ENCODE measurements at regions of chr5 and their contacts with region 1.

Region 1: GRCh38 chr5:88268385-88269184 is at the start of gene TMEM161B:
- DNase-seq: peak; percentile 84
- H3K4me3 ChIP-seq: peak within 1 kb of the TSS; percentile 59 to 91 (median 86)
- H3K27ac ChIP-seq: peak within 1 kb of the TSS; percentile 4
- H3K4me1 ChIP-seq: peaks cover 11% of the 10 kb centered on the region
- H3K27me3 ChIP-seq: no peaks in the 10 kb centered on the region
- CTCF ChIP-seq: no peak
- POLR2A ChIP-seq: peak; percentile 72
- total RNA-seq, gene TMEM161B: 11.5 and 11.6 TPM in 2 replicates

Region 2: GRCh38 chr5:88119535-88120125 is 149.0 kb before region 1 on chr5:
- CTCF ChIA-PET with region 1: no interaction called
- POLR2A ChIA-PET with region 1: no interaction called
- dilution Hi-C with region 1: no loop called
- intact Hi-C with region 1: no loop called
- DNase-seq: no peak
- H3K4me3 ChIP-seq: no peak overlapping the region
- H3K27ac ChIP-seq: no peak overlapping the region
- H3K4me1 ChIP-seq: no peaks in the 10 kb centered on the region
- H3K27me3 ChIP-seq: no peaks in the 10 kb centered on the region
- CTCF ChIP-seq: no peak
- POLR2A ChIP-seq: no peak

Region 3: GRCh38 chr5:88140856-88141752 is 127.5 kb before region 1 on chr5:
- CTCF ChIA-PET with region 1: no interaction called
- POLR2A ChIA-PET with region 1: no interaction called
- dilution Hi-C with region 1: no loop called
- intact Hi-C with region 1: loop called (anchors 5 kb)
- DNase-seq: peak; percentile 96
- H3K4me3 ChIP-seq: peak overlapping the region; percentile 31 to 75 (median 38)
- H3K27ac ChIP-seq: no peak overlapping the region
- H3K4me1 ChIP-seq: peaks cover 12% of the 10 kb centered on the region
- H3K27me3 ChIP-seq: peaks cover 58 to 78% of the 10 kb centered on the region in 2 experiments
- CTCF ChIP-seq: peak; percentile 55 to 82
- POLR2A ChIP-seq: no peak

Region 4: DNA sequence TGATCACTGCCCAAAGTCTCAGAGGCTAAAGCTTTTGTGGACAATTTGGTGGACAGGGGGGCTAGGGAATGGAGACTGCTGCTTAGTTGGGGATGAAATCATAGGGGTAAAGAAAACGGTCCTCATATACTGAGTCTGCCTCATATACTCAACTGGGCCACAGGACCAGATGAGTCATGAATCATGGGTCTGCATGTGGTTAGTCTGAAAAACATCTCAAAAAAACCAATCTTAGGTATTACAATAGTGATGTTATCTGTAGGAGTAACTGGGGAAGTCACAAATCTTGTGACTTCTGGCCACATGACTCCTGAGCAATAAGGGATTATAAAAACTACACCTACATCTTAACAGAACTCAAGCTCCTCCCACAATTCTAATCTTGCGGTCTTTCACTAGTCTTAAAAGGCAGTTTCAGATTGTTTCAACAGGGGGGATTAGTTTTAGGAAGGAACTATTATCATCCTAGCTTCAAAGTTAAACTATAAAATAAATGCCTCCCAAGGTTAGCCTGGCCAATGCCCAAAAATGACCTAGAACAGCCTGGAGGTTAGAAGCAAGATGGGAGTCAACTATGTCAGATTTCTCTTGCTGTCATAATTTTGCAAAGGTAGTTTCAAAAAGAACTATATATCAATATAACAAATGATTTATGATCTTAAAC is 17.4 kb before region 1 on chr5:
- CTCF ChIA-PET with region 1: no interaction called
- POLR2A ChIA-PET with region 1: no interaction called
- dilution Hi-C with region 1: no loop called
- intact Hi-C with region 1: no loop called
- DNase-seq: no peak
- H3K4me3 ChIP-seq: no peak overlapping the region
- H3K27ac ChIP-seq: no peak overlapping the region
- H3K4me1 ChIP-seq: no peaks in the 10 kb centered on the region
- H3K27me3 ChIP-seq: no peaks in the 10 kb centered on the region
- CTCF ChIP-seq: no peak
- POLR2A ChIP-seq: no peak

Region 5: GRCh38 chr5:89055695-89056085 is 787.1 kb after region 1 on chr5:
- CTCF ChIA-PET with region 1: no interaction called
- POLR2A ChIA-PET with region 1: no interaction called
- dilution Hi-C with region 1: no loop called
- intact Hi-C with region 1: no loop called
- DNase-seq: no peak
- H3K4me3 ChIP-seq: no peak overlapping the region
- H3K27ac ChIP-seq: no peak overlapping the region
- H3K4me1 ChIP-seq: no peaks in the 10 kb centered on the region
- H3K27me3 ChIP-seq: peaks cover 0 to 2% of the 10 kb centered on the region in 2 experiments
- CTCF ChIP-seq: no peak
- POLR2A ChIP-seq: no peak

Measured in endothelial cell of umbilical vein (primary cell).